ENCODE measurements at regions of chr1 and their contacts with region 1.

Region 1: GRCh38 chr1:171245458-171246064 is 2.7 kb upstream of the FMO1 start:
- DNase-seq: peak; percentile 77
- H3K4me3 Mint-ChIP-seq: no peak overlapping the region
- H3K27ac Mint-ChIP-seq: no peak overlapping the region
- H3K4me1 Mint-ChIP-seq: no peaks in the 10 kb centered on the region
- H3K27me3 Mint-ChIP-seq: peaks cover 15% of the 10 kb centered on the region
- CTCF ChIP-seq: peak; percentile 78

Region 2: GRCh38 chr1:171173069-171173468 is 72.5 kb before region 1 on chr1:
- CTCF ChIA-PET with region 1: interaction called, 11 read pairs
- POLR2A ChIA-PET with region 1: no interaction called
- intact Hi-C with region 1: no loop called
- DNase-seq: no peak
- H3K4me3 Mint-ChIP-seq: no peak overlapping the region
- H3K27ac Mint-ChIP-seq: no peak overlapping the region
- H3K4me1 Mint-ChIP-seq: no peaks in the 10 kb centered on the region
- H3K27me3 Mint-ChIP-seq: no peaks in the 10 kb centered on the region
- CTCF ChIP-seq: no peak

Region 3: DNA sequence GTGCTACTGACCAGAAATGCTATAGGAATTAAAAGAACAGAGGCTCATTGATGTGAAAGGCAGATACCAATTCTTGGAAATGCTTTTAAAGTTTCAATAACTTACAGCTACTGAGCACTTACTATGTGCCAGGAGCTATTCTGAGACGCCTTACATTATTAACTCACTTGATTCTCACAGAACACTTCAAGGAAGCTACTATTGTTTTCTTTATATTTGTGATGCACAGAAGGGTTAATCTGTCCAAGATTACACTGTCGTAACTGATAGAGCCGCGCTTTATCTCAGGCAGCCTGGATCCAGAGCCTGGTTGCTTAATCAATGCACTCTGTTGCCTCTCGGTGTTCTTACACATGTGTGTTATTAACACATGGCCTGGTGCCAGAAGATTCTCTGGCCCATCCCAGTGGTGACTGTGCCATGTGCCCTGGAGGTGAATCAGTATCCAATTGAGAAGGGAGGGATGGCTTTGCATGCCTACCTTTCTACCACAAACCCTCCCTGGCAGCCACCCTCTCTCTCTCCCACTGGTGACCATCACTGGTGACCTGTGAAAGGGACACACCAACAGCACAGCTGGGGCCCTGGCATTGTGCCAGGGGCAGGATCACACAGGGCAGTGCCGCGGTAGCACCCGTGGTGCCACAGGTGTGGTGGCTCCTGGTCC is 11.5 kb after region 1 on chr1:
- CTCF ChIA-PET with region 1: interaction called, 99 read pairs
- POLR2A ChIA-PET with region 1: no interaction called
- intact Hi-C with region 1: no loop called
- DNase-seq: peak; percentile 98
- H3K4me3 Mint-ChIP-seq: no peak overlapping the region
- H3K27ac Mint-ChIP-seq: no peak overlapping the region
- H3K4me1 Mint-ChIP-seq: peaks cover 24% of the 10 kb centered on the region
- H3K27me3 Mint-ChIP-seq: no peaks in the 10 kb centered on the region
- CTCF ChIP-seq: no peak

Region 4: DNA sequence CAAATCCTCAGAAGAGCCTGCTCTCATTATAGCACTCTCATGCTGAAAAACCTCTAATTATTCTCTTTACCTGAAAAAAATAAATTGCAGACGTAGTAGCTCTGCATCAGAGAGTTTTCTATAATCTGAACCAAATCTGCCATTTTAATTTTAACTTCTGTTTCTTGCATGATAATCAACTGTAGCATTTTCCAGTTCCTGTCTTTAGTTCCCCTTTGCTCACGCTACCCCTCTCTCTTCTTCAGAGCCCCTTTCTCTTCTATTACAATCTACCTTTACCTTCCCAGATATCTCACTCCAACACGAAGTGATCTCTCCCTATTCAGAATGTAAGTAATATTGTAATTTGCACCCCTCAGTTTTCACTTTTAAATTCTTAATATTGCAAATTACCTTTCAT is 34.1 kb after region 1 on chr1:
- CTCF ChIA-PET with region 1: interaction called, 19 read pairs
- POLR2A ChIA-PET with region 1: no interaction called
- intact Hi-C with region 1: no loop called
- DNase-seq: no peak
- H3K4me3 Mint-ChIP-seq: no peak overlapping the region
- H3K27ac Mint-ChIP-seq: no peak overlapping the region
- H3K4me1 Mint-ChIP-seq: no peaks in the 10 kb centered on the region
- H3K27me3 Mint-ChIP-seq: no peaks in the 10 kb centered on the region
- CTCF ChIP-seq: no peak

Region 5: GRCh38 chr1:171403371-171403770 is 157.8 kb after region 1 on chr1:
- CTCF ChIA-PET with region 1: interaction called, 31 read pairs
- POLR2A ChIA-PET with region 1: no interaction called
- intact Hi-C with region 1: loop called (anchors 10 kb)
- DNase-seq: peak; percentile 81
- H3K4me3 Mint-ChIP-seq: no peak overlapping the region
- H3K27ac Mint-ChIP-seq: peak overlapping the region; percentile 86
- H3K4me1 Mint-ChIP-seq: peaks cover 18% of the 10 kb centered on the region
- H3K27me3 Mint-ChIP-seq: no peaks in the 10 kb centered on the region
- CTCF ChIP-seq: no peak